CD14-positive monocyte (primary cell): ENCODE measurements at regions of chr18 and their contacts with region 1.

Region 1: DNA sequence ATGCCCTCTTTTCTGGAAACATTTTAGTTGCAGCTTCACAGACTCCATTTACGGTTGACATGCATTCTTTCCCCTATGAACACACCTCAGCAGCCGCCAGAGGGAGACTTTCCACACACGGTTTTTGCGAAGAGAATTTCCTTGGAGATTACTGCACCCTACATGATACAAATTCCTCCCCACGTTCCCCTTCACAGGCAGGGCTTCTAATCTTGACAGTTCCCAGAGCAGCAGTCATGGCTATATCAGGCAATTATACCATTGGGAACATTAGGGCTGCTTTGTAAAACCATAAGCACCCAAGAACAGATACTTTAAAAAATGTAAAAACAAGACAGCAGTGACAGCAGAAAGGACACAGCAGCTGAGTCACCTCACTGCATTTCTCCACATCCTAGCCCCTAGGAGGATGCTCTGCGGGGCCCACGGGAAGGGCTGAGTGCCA is 253.8 kb downstream of the TGIF1 start:
- DNase-seq: peak; percentile 42 to 61 (median 43)
- H3K4me3 ChIP-seq: no peak overlapping the region
- H3K4me3 Mint-ChIP-seq: peak overlapping the region in 1 of 2 donors; percentile 43
- H3K27ac ChIP-seq: no peak overlapping the region
- H3K27ac Mint-ChIP-seq: peak overlapping the region in 2 of 7 donors; percentile 19 to 23
- H3K4me1 ChIP-seq: peaks cover 19 to 32% of the 10 kb centered on the region in 2 donors
- H3K4me1 Mint-ChIP-seq: peaks cover 28% of the 10 kb centered on the region
- H3K27me3 ChIP-seq: no peaks in the 10 kb centered on the region
- H3K27me3 Mint-ChIP-seq: peaks cover 0 to 2% (median 1%) of the 10 kb centered on the region in 3 donors
- CTCF ChIP-seq: peak; percentile 75

Region 2: DNA sequence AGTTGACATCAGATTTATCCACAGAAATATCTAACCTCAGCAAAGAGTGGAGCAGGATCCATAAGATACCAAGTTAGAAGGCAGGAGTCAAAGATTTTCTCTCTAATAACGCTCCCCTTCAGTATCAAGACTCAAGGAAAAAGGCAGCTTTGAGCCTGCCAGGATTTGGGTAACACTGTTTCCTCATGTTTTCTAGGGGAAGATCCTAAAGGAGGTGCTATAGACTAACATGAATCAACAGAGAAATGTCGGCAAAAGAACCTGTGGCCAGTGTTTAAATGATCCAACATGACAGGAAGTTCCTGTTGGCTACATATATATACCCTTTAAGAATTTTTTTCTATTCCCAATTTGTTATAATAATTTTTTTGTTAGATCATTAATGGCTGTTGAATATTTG is 148.6 kb after region 1 on chr18:
- intact Hi-C with region 1: no loop called
- DNase-seq: no peak
- H3K4me3 ChIP-seq: no peak overlapping the region
- H3K4me3 Mint-ChIP-seq: no peak overlapping the region
- H3K27ac ChIP-seq: no peak overlapping the region
- H3K27ac Mint-ChIP-seq: no peak overlapping the region
- H3K4me1 ChIP-seq: no peaks in the 10 kb centered on the region
- H3K4me1 Mint-ChIP-seq: no peaks in the 10 kb centered on the region
- H3K27me3 ChIP-seq: no peaks in the 10 kb centered on the region
- H3K27me3 Mint-ChIP-seq: peaks cover 0 to 6% (median 0%) of the 10 kb centered on the region in 3 donors
- CTCF ChIP-seq: no peak

Region 3: GRCh38 chr18:3995476-3996102 is 291.8 kb after region 1 on chr18:
- intact Hi-C with region 1: loop called (anchors 10 kb)
- DNase-seq: peak; percentile 48 to 57 (median 56)
- H3K4me3 ChIP-seq: no peak overlapping the region
- H3K4me3 Mint-ChIP-seq: no peak overlapping the region
- H3K27ac ChIP-seq: no peak overlapping the region
- H3K27ac Mint-ChIP-seq: no peak overlapping the region
- H3K4me1 ChIP-seq: no peaks in the 10 kb centered on the region
- H3K4me1 Mint-ChIP-seq: no peaks in the 10 kb centered on the region
- H3K27me3 ChIP-seq: no peaks in the 10 kb centered on the region
- H3K27me3 Mint-ChIP-seq: peaks cover 0 to 2% (median 0%) of the 10 kb centered on the region in 3 donors
- CTCF ChIP-seq: peak; percentile 93

Region 4: GRCh38 chr18:4211111-4211837 is 507.5 kb after region 1 on chr18:
- intact Hi-C with region 1: no loop called
- DNase-seq: no peak
- H3K4me3 ChIP-seq: no peak overlapping the region
- H3K4me3 Mint-ChIP-seq: no peak overlapping the region
- H3K27ac ChIP-seq: no peak overlapping the region
- H3K27ac Mint-ChIP-seq: no peak overlapping the region
- H3K4me1 ChIP-seq: no peaks in the 10 kb centered on the region
- H3K4me1 Mint-ChIP-seq: no peaks in the 10 kb centered on the region
- H3K27me3 ChIP-seq: no peaks in the 10 kb centered on the region
- H3K27me3 Mint-ChIP-seq: peaks cover 0 to 2% (median 0%) of the 10 kb centered on the region in 3 donors
- CTCF ChIP-seq: no peak